OCI-LY7 (cell line): ENCODE measurements at regions of chr1 and their contacts with region 1.

Region 1: DNA sequence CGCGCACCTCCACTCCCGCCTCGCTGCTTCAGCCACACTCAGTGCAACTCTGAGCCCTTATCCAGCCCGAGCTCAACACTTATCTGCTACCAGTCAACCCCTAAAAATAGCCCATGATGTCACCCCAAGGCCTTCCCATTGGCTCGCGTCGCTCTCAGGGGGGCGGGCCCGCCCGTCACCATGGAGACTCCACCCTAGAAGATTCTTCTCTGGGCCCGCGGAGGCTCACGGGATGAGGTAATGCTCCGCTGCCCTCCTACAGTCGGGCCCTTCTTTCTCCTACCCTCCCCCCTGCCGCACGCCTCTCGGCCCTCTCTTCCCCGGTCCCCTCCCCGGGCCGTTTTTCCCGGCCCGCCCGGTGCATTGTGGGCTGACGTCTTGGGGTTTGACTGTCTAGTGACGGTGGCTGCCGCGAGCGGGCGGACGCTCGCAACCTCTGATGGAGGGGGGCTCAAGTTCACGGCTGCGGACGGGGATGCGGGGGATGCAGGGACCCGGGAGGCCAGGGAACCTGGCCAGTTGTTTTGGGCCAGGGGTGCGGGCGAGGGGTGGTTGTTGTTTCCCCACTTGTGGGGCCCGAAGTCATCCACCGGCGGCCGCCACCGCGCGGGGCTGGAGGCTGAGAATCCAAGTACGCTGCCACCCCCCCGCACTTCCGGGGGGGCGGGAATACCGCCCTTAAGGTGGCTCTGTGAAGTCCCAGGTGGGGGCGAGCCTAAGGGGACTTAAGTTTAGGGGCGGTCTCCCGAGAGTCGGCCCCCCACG is at the start of gene JUN:
- DNase-seq: peak; percentile 99
- H3K4me3 ChIP-seq: peak within 1 kb of the TSS; percentile 80
- H3K27ac ChIP-seq: peak within 1 kb of the TSS; percentile 67
- H3K4me1 ChIP-seq: peaks cover 23% of the 10 kb centered on the region
- CTCF ChIP-seq: 0 out of 2 replicates have a peak, but pooled peaks have one; percentile 5
- total RNA-seq, gene JUN: 7.7 and 8.1 TPM in 2 replicates

Region 2: GRCh38 chr1:58412071-58412580 is 372.0 kb before region 1 on chr1:
- CTCF ChIA-PET with region 1: no interaction called
- POLR2A ChIA-PET with region 1: no interaction called
- intact Hi-C with region 1: no loop called
- DNase-seq: no peak
- H3K4me3 ChIP-seq: no peak overlapping the region
- H3K27ac ChIP-seq: no peak overlapping the region
- H3K4me1 ChIP-seq: no peaks in the 10 kb centered on the region
- CTCF ChIP-seq: no peak

Region 3: GRCh38 chr1:58528518-58528917 is 255.7 kb before region 1 on chr1:
- CTCF ChIA-PET with region 1: no interaction called
- POLR2A ChIA-PET with region 1: interaction called, 3 read pairs
- intact Hi-C with region 1: loop called (anchors 5 kb)
- DNase-seq: no peak
- H3K4me3 ChIP-seq: no peak overlapping the region
- H3K27ac ChIP-seq: no peak overlapping the region
- H3K4me1 ChIP-seq: peaks cover 40% of the 10 kb centered on the region
- CTCF ChIP-seq: no peak

Region 4: GRCh38 chr1:58816072-58816746 is 32.0 kb after region 1 on chr1:
- CTCF ChIA-PET with region 1: no interaction called
- POLR2A ChIA-PET with region 1: interaction called, 3 read pairs
- intact Hi-C with region 1: loop called (anchors 1 kb)
- DNase-seq: peak; percentile 84
- H3K4me3 ChIP-seq: peak overlapping the region; percentile 75
- H3K27ac ChIP-seq: peak overlapping the region; percentile 74
- H3K4me1 ChIP-seq: peaks cover 30% of the 10 kb centered on the region
- CTCF ChIP-seq: peak; percentile 42; the same call in 1 of the 2 replicates

Region 5: GRCh38 chr1:58968360-58968952 is 184.3 kb after region 1 on chr1:
- CTCF ChIA-PET with region 1: no interaction called
- POLR2A ChIA-PET with region 1: no interaction called
- intact Hi-C with region 1: loop called (anchors 1 kb)
- DNase-seq: peak; percentile 90
- H3K4me3 ChIP-seq: peak overlapping the region; percentile 37
- H3K27ac ChIP-seq: peak overlapping the region; percentile 85
- H3K4me1 ChIP-seq: peaks cover 45% of the 10 kb centered on the region
- CTCF ChIP-seq: no peak

Region 6: DNA sequence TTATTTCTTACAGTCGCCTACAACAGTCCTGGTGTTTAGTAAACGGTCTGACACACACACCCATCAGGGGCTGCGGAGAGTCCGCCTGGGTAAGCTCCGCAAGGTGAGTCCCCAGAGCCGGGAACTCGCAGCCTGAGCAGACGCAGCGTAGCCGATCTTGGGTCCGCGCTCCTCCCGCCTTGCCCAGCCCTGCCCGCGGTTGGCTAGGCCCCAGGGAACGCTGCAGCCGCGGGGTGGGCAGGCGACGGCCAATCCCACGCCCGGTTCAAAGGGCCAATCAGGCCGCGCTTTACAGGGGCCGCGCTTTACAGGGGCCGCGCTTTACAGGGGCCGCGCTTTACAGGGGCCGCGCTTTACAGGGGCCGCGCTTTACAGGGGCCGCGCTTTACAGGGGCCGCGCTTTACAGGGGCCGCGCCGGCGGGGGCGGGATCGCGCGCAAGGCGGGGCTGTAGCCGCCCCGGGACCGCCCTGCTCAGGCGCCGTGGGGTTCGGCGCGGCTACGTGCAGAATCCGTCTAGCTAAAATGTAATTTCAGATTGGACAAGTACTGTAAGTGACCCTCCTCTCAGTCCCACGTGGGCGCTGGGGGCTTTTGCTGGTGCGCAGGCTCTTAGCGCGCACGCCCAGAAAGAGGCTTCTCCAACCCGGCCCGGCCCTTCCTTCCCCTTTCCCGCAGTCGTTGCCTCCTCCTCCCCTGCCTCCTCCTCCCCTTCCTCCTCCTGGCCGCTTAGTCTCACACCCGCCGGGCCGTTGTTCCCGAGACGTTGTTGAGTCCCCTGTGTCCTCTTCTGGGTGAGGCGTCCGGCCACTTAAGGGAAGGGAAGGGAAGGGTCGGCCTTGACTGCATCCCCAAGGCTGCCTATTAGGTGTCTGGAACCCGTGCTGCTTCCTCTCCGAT is 512.4 kb after region 1 on chr1 and contains the start of gene FGGY:
- CTCF ChIA-PET with region 1: no interaction called
- POLR2A ChIA-PET with region 1: interaction called, 3 read pairs
- intact Hi-C with region 1: loop called (anchors 10 kb)
- DNase-seq: peak; percentile 11
- H3K4me3 ChIP-seq: peak within 1 kb of the TSS; percentile 56
- H3K27ac ChIP-seq: no peak within 1 kb of the TSS
- H3K4me1 ChIP-seq: no peaks in the 10 kb centered on the region
- CTCF ChIP-seq: no peak
- total RNA-seq, gene FGGY: 0.18 and 0.63 TPM in 2 replicates